ENCODE measurements at regions of chr22 and their contacts with region 1.

Region 1: GRCh38 chr22:38284042-38284402 is 11.2 kb upstream of the TMEM184B start:
- DNase-seq: peak; percentile 96
- ATAC-seq: peak; percentile 89
- H3K4me3 ChIP-seq: no peak overlapping the region
- H3K27ac ChIP-seq: peak overlapping the region; percentile 62; the same call in 1 of the 2 replicates
- H3K4me1 ChIP-seq: peaks cover 12% of the 10 kb centered on the region
- H3K27me3 ChIP-seq: no peaks in the 10 kb centered on the region
- CTCF ChIP-seq: no peak
- POLR2A ChIP-seq: no peak; the same call in 1 of the 2 replicates
- RAD21 ChIP-seq: no peak; the same call in 1 of the 2 replicates

Region 2: GRCh38 chr22:38218661-38219622 is 65.1 kb before region 1 on chr22:
- CTCF ChIA-PET with region 1: no interaction called
- POLR2A ChIA-PET with region 1: no interaction called
- dilution Hi-C with region 1: no loop called
- in situ Hi-C with region 1: no loop called
- intact Hi-C with region 1: loop called (anchors 1 kb)
- DNase-seq: peak; percentile 97
- ATAC-seq: peak; percentile 83
- H3K4me3 ChIP-seq: no peak overlapping the region
- H3K27ac ChIP-seq: peak overlapping the region; percentile 95
- H3K4me1 ChIP-seq: peaks cover 29% of the 10 kb centered on the region
- H3K27me3 ChIP-seq: no peaks in the 10 kb centered on the region
- CTCF ChIP-seq: no peak
- POLR2A ChIP-seq: peak; percentile 71
- RAD21 ChIP-seq: peak; percentile 33

Region 3: DNA sequence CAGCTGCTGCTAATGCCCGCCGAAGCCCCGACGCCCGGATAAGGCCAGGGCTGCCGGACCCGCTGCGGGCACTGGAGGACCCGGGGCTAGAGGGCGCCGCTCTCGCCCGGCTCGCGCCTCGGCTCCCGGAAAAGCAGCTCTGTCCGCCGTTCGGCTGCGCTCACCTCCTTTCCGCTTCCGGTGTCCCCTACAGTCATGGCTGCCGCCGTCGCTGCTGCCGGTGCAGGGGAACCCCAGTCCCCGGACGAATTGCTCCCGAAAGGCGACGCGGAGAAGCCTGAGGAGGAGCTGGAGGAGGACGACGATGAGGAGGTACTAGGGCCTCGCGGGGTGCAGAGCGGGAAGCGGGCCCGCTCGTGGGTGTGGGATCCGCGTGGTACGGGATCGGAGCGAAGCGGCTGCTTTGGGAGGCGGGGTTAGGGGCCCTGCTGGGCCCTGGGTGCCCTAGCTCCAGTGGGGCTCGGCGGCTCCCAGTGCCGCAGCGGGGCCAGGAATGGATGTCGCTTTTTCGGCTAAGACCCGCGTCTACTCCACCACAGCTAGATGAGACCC is 397.8 kb after region 1 on chr22 and contains the start of gene TOMM22:
- CTCF ChIA-PET with region 1: no interaction called
- POLR2A ChIA-PET with region 1: no interaction called
- dilution Hi-C with region 1: no loop called
- in situ Hi-C with region 1: no loop called
- intact Hi-C with region 1: no loop called
- DNase-seq: peak; percentile 83
- ATAC-seq: peak; percentile 100
- H3K4me3 ChIP-seq: peak within 1 kb of the TSS; percentile 83
- H3K27ac ChIP-seq: peak within 1 kb of the TSS; percentile 85
- H3K4me1 ChIP-seq: no peaks in the 10 kb centered on the region; the same call in 1 of the 2 replicates
- H3K27me3 ChIP-seq: no peaks in the 10 kb centered on the region
- CTCF ChIP-seq: peak; percentile 82
- POLR2A ChIP-seq: peak; percentile 81
- RAD21 ChIP-seq: peak; percentile 41
- total RNA-seq, gene TOMM22: 78.0 and 139 TPM in 2 replicates